ENCODE measurements at regions of chr17 and their contacts with region 1.

Region 1: DNA sequence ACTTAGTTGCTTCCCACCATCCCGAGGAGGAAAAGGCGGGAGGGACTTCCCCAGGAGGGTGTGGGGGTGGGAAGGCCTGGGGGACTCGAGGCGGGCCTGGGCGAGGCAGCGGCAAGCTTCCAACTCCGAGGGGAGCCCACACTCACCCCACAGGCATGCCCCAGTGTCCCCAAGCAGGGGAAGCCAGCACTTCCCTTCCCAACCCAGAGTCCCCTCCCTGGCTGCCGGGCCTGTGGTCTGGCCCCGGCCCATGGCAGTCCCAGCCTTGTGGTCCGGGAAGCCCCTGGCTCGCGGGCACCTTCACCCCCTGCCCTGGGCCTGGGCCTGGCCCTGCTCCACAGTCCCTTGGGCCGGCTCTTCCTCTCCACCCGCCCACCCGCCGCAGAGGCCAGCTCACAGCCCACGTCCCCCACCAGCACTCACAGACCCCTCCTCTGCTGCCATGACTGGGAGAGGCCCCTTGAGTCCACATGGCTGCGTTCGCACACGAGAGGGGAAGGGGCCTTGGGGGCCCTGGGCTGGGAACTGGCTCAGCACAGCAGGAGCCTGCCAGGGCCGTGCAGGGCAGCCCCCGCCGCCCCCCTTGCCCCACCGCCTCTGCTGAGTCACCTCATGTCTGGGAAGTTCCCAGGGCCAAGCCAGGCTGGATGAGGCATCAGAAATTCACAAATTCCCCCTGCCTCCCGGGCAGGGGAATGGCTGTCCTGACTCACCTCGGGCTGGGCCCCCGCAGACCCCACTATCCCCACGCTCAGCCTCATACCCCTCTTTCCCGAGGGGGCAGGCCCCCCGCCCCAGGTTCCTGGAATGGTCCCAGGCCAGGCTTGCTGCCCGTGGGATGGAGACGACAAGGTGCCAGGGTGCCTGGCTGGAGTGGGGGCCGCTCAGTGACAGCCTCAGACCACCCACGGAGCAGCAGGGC is 27.8 kb downstream of the BAHCC1 start:
- DNase-seq: no peak
- H3K4me3 ChIP-seq: peak overlapping the region in 1 of 2 donors; percentile 38
- H3K27ac ChIP-seq: peak overlapping the region; percentile 79
- H3K4me1 ChIP-seq: peaks cover 71% of the 10 kb centered on the region
- H3K27me3 ChIP-seq: no peaks in the 10 kb centered on the region
- CTCF ChIP-seq: no peak
- POLR2A ChIP-seq: no peak

Region 2: GRCh38 chr17:81277421-81277820 is 145.6 kb before region 1 on chr17:
- intact Hi-C with region 1: no loop called
- DNase-seq: no peak
- H3K4me3 ChIP-seq: peak overlapping the region; percentile 13 to 22
- H3K27ac ChIP-seq: peak overlapping the region; percentile 16
- H3K4me1 ChIP-seq: peaks cover 15% of the 10 kb centered on the region
- H3K27me3 ChIP-seq: no peaks in the 10 kb centered on the region
- CTCF ChIP-seq: no peak
- POLR2A ChIP-seq: no peak

Region 3: GRCh38 chr17:81405411-81405872 is 17.6 kb before region 1 on chr17:
- intact Hi-C with region 1: loop called (anchors 2 kb)
- DNase-seq: peak in 1 of 2 donors; percentile 96
- H3K4me3 ChIP-seq: peak overlapping the region in 1 of 2 donors; percentile 3
- H3K27ac ChIP-seq: peak overlapping the region; percentile 26
- H3K4me1 ChIP-seq: peaks cover 66% of the 10 kb centered on the region
- H3K27me3 ChIP-seq: no peaks in the 10 kb centered on the region
- CTCF ChIP-seq: no peak
- POLR2A ChIP-seq: no peak

Region 4: DNA sequence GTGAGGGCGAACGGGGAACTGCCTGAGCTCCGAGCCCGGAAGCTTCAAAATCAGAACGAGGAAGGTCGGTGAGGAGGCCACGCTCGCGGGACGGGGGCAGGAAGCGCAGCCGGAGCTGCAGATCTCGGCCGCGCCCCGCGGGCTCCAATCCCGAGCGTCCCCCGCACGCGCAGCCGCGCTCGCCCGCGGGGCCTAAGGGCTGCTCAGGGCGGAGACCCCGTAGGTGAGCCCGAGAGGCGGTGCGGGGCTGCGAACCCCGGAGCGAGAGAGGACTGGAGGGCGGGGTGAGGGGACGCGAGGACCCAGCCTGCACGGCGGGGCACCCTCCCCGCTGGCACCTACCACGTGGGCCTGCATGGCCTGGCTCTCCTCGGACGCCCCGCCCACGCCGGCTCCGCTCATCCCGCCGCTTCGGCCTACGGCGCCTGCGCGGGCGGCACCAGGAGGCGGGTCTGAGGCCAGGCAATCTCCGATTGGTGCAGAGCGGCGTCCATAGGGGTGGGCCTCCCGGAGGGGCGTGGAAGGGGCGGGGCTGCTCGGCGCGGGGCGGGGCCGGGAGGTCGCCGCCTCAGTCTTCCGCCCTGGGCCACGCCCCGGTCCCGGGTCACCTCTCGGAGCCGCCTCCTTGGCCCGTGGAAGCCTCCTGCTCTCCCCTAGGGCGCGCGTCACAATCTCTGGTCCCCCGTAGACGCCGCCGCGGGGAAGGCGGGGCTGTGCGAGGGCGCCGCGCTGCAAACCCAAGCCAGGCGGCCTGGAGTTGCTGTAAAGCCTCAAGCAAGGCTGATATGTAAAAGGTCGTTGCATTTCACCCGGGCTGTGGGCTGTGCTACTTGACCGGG is 1628.6 kb after region 1 on chr17:
- intact Hi-C with region 1: no loop called
- DNase-seq: peak in 1 of 2 donors; percentile 98
- H3K4me3 ChIP-seq: peak overlapping the region; percentile 76 to 89
- H3K27ac ChIP-seq: peak overlapping the region; percentile 97
- H3K4me1 ChIP-seq: peaks cover 41% of the 10 kb centered on the region
- H3K27me3 ChIP-seq: no peaks in the 10 kb centered on the region
- CTCF ChIP-seq: peak in 2 of 3 experiments; percentile 1 to 9
- POLR2A ChIP-seq: peak in 1 of 2 donors; percentile 85